Activated CD4-positive, alpha-beta T cell treated with anti-CD3 and anti-CD28 coated beads for 36 hours (primary cell): ENCODE measurements at regions of chr1 and their contacts with region 1.

Region 1: GRCh38 chr1:61270761-61271411 is 188.5 kb downstream of the NFIA start:
- DNase-seq: peak; percentile 49
- ATAC-seq: peak; percentile 86
- H3K4me3 Mint-ChIP-seq: no peak overlapping the region
- H3K27ac Mint-ChIP-seq: peak overlapping the region; percentile 76
- H3K4me1 Mint-ChIP-seq: peaks cover 40% of the 10 kb centered on the region
- H3K27me3 Mint-ChIP-seq: peaks cover 5% of the 10 kb centered on the region

Region 2: DNA sequence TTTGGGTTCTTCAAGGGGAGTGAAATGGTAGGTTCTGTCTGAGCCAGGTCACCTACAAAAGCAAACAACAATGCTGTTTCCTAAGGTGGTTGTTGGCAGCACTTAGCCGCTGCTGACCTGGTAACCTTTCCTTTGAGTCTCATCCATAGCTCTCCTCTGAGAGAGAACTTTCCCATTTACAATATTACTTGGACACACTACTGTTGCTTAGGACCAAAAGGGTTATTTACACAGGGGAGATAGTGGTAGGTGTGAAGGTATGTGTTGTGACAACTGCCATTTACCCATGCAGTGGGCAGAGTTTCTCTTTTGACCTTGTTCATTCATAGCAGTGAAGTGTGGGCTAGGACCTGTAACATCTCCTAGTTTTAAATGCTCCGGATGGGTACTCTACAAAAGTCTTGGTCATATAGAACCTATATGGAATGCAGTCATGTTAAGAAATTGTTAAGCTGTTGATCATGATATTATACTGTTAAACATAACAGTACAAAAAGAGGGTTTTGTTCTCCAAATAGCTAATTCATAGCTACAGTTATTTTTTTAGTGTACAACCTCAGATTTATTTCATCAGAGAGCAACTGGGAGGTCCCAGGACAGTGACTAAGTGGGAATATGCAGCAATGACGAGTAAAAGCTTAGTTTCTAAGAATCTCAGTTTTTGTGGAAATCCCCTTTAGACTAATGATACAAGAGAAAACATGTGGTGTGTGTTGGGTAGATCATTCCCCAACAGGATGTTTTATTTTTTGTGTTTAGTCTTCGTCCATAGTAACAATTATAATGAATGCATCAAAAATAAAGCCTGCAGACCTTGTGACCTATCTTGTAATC is 31.2 kb after region 1 on chr1:
- CTCF ChIA-PET with region 1: interaction called, 16 read pairs
- POLR2A ChIA-PET with region 1: interaction called, 18 read pairs
- intact Hi-C with region 1: loop called (anchors 1 kb)
- DNase-seq: peak; percentile 46
- ATAC-seq: peak; percentile 90
- H3K4me3 Mint-ChIP-seq: no peak overlapping the region
- H3K27ac Mint-ChIP-seq: peak overlapping the region; percentile 92
- H3K4me1 Mint-ChIP-seq: peaks cover 28% of the 10 kb centered on the region
- H3K27me3 Mint-ChIP-seq: peaks cover 3% of the 10 kb centered on the region

Region 3: GRCh38 chr1:61332196-61332753 is 61.4 kb after region 1 on chr1:
- CTCF ChIA-PET with region 1: interaction called, 5 read pairs
- POLR2A ChIA-PET with region 1: interaction called, 14 read pairs
- intact Hi-C with region 1: loop called (anchors 1 kb)
- DNase-seq: peak; percentile 40
- ATAC-seq: peak; percentile 94
- H3K4me3 Mint-ChIP-seq: no peak overlapping the region
- H3K27ac Mint-ChIP-seq: peak overlapping the region; percentile 48
- H3K4me1 Mint-ChIP-seq: peaks cover 21% of the 10 kb centered on the region
- H3K27me3 Mint-ChIP-seq: peaks cover 5% of the 10 kb centered on the region